ENCODE measurements at regions of chr15 and their contacts with region 1.

Region 1: DNA sequence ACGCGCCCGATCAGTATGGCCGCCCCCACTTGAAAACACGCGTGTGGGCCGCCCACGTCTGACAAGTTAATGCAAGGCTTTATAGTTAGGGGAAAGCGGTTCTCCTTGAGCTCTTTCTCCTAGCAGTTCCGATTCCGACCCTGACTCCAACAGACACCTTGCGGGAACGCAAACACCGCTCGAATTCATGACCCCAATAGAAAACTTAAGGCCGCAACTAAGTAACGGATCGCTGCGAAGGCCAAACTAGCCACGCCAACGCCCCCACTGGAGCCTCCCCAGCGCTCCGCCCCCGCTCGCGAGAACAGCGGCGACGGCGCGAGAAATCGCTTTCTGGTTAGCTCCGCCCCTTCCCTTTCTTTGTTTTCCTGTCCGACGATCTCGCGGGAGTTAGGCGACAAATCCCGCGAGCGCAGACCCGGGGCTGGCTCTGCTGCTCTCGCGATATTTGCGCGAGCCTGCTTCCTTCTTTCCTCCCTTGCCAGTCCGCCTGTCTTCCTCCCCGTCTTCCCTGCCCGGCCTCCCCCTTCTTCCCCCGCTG is at the start of gene IREB2:
- DNase-seq: peak; percentile 95
- ATAC-seq: peak; percentile 91
- H3K4me3 Mint-ChIP-seq: peak within 1 kb of the TSS; percentile 98
- H3K27ac Mint-ChIP-seq: peak within 1 kb of the TSS; percentile 97
- H3K4me1 Mint-ChIP-seq: peaks cover 41% of the 10 kb centered on the region
- H3K27me3 Mint-ChIP-seq: peaks cover 1% of the 10 kb centered on the region
- CTCF ChIP-seq: no peak
- total RNA-seq, gene IREB2: 69.9 and 75.9 TPM in 2 replicates

Region 2: DNA sequence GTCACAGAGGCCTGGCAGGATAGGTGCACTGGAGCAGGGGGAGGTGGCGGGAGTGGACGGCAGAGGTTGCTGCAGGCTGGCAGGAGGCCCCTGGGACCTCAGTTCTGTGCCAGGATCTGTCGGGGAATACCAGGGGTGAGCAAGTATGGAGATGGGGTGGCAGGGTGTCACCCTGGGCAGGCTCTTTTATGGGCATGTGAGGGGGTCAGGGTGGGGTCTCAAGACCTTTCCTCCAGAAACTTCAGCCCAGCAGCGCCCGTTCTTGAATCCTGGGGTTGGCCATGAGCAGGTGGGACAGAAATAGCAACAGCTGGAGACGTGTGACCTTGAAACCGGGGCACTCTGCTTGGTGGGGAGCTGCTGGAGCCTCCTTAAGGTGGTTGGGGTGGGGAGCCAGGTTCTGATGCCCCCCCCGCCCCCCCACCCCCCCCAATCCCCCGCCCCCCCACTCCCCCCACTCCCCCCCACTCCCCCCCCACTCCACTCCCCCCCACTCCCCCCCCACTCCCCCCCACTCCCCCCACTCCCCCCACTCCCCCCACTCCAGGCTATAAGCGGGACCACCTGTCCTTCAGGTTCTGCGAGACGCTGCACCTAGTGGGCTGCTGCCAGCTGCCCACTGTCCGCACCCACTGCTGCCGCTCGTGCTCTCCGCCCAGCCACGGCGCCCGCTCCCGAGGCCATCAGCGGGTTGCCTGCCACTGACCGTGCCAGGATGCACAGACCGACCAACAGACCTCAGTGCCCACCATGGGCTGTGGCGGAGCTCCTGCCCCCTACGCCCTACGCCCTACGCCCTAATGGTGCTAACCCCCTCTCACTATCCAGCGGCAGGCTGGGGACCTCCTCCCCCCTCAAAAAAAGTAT is 445.2 kb before region 1 on chr15:
- CTCF ChIA-PET with region 1: no interaction called
- POLR2A ChIA-PET with region 1: interaction called, 3 read pairs
- intact Hi-C with region 1: loop called (anchors 5 kb)
- DNase-seq: no peak
- ATAC-seq: no peak
- H3K4me3 Mint-ChIP-seq: no peak overlapping the region
- H3K27ac Mint-ChIP-seq: peak overlapping the region; percentile 66
- H3K4me1 Mint-ChIP-seq: peaks cover 48% of the 10 kb centered on the region
- H3K27me3 Mint-ChIP-seq: no peaks in the 10 kb centered on the region
- CTCF ChIP-seq: no peak

Region 3: DNA sequence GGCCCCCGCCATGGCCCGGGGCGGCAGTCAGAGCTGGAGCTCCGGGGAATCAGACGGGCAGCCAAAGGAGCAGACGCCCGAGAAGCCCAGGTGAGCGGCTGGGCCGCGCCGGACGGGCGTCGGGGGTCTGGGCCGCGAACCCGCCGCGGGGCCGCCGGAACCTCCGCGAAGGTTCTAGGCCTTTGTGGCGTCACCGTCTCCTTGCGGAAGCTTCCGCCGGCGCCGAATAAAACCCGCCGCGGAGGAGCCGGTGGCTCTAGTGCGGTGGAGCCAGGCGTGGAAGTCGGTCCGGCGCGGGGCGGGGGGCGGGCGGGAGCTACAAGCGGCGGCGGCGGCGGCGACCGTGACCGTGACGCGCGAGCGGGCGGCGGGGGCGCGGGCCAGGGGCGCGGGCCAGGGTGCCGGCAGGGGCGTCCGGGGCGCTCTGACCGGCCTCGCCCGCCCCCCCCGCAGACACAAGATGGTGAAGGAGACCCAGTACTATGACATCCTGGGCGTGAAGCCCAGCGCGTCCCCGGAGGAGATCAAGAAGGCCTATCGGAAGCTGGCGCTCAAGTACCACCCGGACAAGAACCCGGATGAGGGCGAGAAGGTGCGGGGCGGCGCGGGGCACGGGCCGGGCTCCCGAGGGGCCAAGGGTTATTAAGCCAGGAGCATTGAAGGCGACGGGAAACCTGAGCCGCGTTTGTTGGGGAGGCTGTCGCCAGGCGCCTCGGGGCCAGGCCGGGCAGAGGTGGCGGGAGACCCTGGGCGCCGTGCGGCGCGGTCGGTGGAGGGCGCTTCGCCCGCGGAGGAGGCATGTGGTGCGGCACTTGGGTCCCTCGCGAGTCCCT is 173.3 kb before region 1 on chr15 and contains the start of gene DNAJA4:
- CTCF ChIA-PET with region 1: no interaction called
- POLR2A ChIA-PET with region 1: interaction called, 10 read pairs
- intact Hi-C with region 1: no loop called
- DNase-seq: peak; percentile 46
- ATAC-seq: peak; percentile 72
- H3K4me3 Mint-ChIP-seq: peak within 1 kb of the TSS; percentile 84
- H3K27ac Mint-ChIP-seq: peak within 1 kb of the TSS; percentile 70
- H3K4me1 Mint-ChIP-seq: peaks cover 13% of the 10 kb centered on the region
- H3K27me3 Mint-ChIP-seq: no peaks in the 10 kb centered on the region
- CTCF ChIP-seq: no peak
- total RNA-seq, gene DNAJA4: 18.8 and 22.3 TPM in 2 replicates

Region 4: GRCh38 chr15:78422571-78423340 is 15.1 kb before region 1 on chr15:
- CTCF ChIA-PET with region 1: interaction called, 15 read pairs
- POLR2A ChIA-PET with region 1: interaction called, 7 read pairs
- intact Hi-C with region 1: no loop called
- DNase-seq: peak; percentile 35
- ATAC-seq: peak; percentile 91
- H3K4me3 Mint-ChIP-seq: no peak overlapping the region
- H3K27ac Mint-ChIP-seq: no peak overlapping the region
- H3K4me1 Mint-ChIP-seq: no peaks in the 10 kb centered on the region
- H3K27me3 Mint-ChIP-seq: peaks cover 19% of the 10 kb centered on the region
- CTCF ChIP-seq: peak; percentile 86

Region 5: DNA sequence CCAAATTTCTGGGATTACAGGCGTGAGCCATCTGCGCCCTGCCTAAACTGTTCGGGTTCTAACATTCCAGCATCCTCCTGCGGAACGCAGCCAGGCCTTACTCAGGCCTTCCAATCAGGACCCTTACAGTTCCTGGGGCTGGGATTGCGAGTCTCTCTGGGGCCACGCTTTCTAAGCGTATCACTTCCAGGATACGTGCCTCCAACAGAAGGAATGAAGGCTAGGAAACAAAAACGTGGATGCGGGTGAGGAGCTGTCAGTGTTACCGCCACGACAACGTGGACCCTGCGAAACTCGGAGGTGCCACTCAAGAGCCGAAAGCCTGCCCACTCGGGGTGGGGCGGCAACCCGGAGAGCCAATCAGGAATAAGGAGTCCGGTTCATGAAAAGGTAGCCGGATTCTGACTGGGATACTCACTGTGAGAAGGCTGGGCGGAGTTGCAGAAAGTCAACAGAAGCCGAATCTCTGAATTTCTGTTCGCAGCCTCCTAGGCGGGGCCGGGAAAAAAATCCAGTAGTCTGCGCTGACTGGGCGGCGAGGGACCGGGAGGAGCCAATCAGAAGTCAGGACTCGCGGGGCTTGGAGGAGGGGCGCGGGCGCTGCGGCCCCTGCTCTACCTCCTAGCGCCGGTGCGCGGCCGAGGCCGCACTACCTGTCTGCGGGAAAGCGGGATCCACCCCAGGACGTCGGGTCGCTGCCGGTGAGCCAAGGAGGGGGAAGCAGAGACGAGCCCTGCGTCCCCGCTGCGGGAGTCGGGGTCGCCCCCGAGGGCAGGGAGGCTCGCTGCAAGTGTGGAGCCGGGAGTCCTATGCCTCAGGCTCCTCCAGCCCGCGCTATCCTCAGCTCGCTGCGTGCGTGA is 69.4 kb after region 1 on chr15 and contains the start of gene HYKK:
- CTCF ChIA-PET with region 1: no interaction called
- POLR2A ChIA-PET with region 1: interaction called, 8 read pairs
- intact Hi-C with region 1: loop called (anchors 2 kb)
- DNase-seq: peak; percentile 53
- ATAC-seq: peak; percentile 87
- H3K4me3 Mint-ChIP-seq: peak within 1 kb of the TSS; percentile 91
- H3K27ac Mint-ChIP-seq: no peak within 1 kb of the TSS
- H3K4me1 Mint-ChIP-seq: peaks cover 11% of the 10 kb centered on the region
- H3K27me3 Mint-ChIP-seq: peaks cover 13% of the 10 kb centered on the region
- CTCF ChIP-seq: no peak
- total RNA-seq, gene HYKK: 0.10 and 0.53 TPM in 2 replicates

Region 6: DNA sequence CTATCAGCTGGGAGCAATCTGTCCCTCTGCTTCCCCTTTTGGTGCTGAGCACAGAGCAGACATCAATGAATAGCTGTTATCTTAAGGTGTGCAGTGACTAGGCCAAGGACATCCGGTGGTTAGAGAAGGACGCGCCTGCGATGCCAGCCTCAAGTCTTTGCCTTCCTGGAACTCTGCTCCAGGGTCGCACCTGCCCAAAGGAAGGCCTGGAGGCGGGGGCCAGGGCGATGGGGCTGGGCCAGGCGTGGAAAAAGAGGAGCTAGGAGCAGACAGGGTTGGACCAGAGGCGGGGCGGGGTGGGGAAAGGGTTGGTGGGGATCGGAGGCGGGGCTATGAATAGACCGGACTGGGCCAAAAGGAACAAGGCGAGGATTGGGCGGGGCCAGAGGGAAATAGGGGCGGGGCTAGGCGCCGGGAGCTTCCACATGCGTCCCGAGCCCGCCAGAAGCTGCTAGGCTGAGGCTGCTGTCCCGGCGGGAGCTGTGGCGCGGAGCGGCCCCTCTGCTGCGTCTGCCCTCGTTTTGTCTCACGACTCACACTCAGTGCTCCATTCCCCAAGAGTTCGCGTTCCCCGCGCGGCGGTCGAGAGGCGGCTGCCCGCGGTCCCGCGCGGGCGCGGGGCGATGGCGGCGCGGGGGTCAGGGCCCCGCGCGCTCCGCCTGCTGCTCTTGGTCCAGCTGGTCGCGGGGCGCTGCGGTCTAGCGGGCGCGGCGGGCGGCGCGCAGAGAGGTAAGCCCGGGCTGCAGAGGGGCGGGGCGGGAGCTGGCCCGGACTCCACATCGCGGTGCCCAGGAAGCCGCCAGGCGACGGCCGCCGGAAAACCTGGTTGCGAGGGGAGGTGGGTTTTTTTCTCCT is 127.5 kb after region 1 on chr15 and contains the start of gene CHRNA5:
- CTCF ChIA-PET with region 1: no interaction called
- POLR2A ChIA-PET with region 1: interaction called, 11 read pairs
- intact Hi-C with region 1: loop called (anchors 1 kb)
- DNase-seq: peak; percentile 80
- ATAC-seq: peak; percentile 93
- H3K4me3 Mint-ChIP-seq: peak within 1 kb of the TSS; percentile 86
- H3K27ac Mint-ChIP-seq: peak within 1 kb of the TSS; percentile 67
- H3K4me1 Mint-ChIP-seq: peaks cover 21% of the 10 kb centered on the region
- H3K27me3 Mint-ChIP-seq: peaks cover 3% of the 10 kb centered on the region
- CTCF ChIP-seq: no peak
- total RNA-seq, gene CHRNA5: 1.3 TPM in 2 replicates

Region 7: DNA sequence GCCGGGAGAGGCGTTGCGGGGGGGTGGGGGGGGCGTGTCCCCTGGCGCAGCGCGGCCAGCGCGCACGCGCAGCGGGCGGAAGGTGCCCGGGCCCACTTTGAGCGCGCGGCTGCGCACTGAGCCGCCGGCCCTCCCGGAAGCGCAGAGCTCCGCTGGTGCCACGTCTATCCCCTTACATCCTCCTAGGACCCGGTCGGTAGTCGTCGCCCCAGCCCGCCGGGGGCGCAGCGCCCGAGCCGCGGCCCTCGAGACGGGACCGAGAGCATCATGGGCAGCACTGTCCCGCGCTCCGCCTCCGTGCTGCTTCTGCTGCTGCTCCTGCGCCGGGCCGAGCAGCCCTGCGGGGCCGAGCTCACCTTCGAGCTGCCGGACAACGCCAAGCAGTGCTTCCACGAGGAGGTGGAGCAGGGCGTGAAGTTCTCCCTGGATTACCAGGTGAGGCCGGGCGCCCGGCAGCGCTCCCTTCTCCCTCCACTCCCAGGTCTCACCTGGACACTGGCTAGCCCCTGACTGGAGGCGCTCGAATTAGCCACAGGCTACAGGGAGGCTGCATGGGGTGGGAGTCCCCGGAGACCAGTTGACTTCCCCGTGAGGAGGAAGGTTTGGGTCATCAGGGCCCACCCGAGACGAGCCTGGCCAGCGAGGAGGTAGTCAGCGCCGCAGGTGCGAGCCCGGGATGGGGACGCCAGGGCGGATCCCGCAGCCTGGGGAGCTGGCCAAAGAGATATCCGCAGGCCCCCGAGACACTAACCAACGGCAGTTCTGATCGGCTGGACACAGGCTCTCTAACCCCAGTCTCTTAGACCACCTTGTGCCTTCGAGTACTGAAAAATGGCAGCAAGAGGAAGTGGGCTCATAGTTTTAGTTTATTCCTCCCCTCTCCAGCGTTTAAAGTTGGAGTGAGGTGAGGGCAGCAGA is 873.4 kb after region 1 on chr15 and contains the start of gene TMED3:
- CTCF ChIA-PET with region 1: no interaction called
- POLR2A ChIA-PET with region 1: no interaction called
- intact Hi-C with region 1: loop called (anchors 2 kb)
- DNase-seq: peak; percentile 80
- ATAC-seq: peak; percentile 94
- H3K4me3 Mint-ChIP-seq: peak within 1 kb of the TSS; percentile 84
- H3K27ac Mint-ChIP-seq: peak within 1 kb of the TSS; percentile 68
- H3K4me1 Mint-ChIP-seq: peaks cover 29% of the 10 kb centered on the region
- H3K27me3 Mint-ChIP-seq: peaks cover 2% of the 10 kb centered on the region
- CTCF ChIP-seq: no peak
- total RNA-seq, gene TMED3: 24.7 and 25.0 TPM in 2 replicates

Measured in activated B cell treated with CpG ODN at 0.5 μM for 24 hours (primary cell).